Activated CD8-positive, alpha-beta T cell treated with anti-CD3 and anti-CD28 coated beads, Interleukin-2, amount 10 ng/mL, durations not matched to agents 7 days and 5 days (primary cell): ENCODE measurements at regions of chr9 and their contacts with region 1.

Region 1: DNA sequence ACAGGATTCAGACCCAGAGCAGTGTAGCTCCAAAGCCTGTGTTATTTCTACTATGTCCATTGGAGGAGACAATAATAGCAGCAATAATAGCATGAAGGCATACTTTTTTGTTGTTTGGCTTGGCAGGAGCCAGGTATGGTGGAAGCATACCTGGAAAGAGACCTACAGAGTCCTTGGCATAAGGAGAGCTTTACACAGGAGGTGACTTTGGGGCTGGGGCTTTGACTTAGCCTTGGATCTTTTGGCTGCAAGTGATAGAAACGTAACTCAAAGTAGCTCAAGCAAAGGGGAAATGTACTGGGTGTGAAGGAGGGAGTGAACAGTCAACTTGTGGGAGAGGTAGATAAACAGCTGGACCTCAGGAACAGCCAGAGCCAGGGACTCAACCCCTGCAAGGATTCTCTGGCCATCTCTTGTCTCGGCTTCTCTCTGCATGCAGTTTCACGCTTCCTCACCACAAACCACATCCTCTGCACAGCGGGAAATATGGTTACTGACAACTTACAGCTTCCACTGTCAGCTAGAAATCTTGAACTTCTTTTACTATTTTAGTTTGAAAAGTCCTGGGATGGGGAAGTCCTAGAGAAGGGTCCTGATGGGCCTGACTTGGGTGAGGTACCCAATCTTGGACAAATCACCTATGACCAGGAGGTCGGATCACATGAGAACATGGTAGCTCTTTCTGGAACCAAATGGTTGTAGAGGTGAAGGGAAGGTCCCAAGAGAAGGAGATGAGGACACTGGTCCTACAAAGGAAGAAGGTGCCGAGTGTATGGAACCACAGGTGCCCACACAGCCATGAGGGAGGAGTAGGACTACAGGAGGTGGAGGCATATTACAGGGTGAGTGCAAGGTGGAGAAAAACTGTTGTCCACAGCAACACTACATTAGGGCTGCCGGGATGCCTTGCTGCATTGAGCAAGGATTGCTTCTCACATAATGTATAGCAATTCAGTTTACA is 47.0 kb upstream of the TGFBR1 start:
- DNase-seq: peak; percentile 94
- ATAC-seq: peak; percentile 82
- H3K4me3 Mint-ChIP-seq: peak overlapping the region; percentile 78
- H3K27ac Mint-ChIP-seq: peak overlapping the region; percentile 98
- H3K4me1 Mint-ChIP-seq: peaks cover 82% of the 10 kb centered on the region
- H3K27me3 Mint-ChIP-seq: no peaks in the 10 kb centered on the region

Region 2: DNA sequence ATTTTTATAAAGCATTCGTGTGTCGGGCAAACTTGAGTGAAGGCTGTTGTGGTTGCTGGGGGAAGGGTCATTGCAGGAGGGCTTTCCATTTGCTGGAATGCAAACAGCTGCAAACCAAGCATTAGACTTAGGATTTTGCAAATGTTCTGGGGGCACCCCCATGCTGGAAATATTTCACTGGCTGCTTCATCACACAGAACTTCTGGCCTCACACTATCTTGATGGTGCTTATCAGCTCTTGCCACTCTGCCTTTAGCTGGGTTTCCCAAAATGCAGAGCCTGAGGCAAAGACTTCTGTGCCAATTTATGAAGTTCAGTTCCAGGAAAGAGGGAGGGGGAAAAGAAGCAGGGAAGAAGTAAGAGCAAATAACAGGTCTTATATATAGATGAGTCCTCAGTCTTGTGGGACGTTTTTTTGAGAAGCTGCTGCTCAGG is 122.9 kb before region 1 on chr9:
- CTCF ChIA-PET with region 1: no interaction called
- POLR2A ChIA-PET with region 1: no interaction called
- DNase-seq: no peak
- ATAC-seq: no peak
- H3K4me3 Mint-ChIP-seq: no peak overlapping the region
- H3K27ac Mint-ChIP-seq: no peak overlapping the region
- H3K4me1 Mint-ChIP-seq: no peaks in the 10 kb centered on the region
- H3K27me3 Mint-ChIP-seq: peaks cover 36% of the 10 kb centered on the region

Region 3: DNA sequence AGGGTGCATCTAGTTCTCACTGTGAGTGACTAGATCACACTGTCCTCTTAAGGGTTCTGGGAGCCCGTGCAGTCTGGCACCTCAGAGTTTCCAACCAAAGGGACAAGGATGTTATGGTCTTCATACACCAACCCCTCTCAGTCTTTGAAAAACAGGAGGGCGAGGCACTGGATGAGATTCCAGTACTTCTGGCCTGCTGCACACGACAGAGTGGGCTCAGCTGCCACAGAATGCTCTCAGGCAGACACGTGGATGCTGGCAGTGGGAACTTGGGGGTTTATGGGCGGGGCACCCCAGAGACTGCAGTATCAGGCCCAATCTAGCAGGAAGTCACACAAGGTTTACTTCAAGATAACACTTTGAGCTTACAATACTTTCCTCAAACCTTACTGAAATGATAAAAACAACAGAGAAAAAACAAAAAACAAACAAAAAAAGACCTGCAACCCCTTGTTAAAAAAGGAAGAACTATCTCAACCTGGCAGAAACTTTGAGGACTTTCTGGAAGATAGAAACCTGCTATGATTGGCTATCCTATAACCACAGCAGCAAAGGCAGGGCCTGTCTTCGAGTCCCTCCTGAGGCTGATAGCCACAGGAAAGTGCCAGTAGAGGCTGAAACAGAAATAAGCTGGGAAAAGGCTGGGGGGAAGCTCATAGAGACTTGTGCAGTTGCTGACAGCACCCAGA is 18.7 kb after region 1 on chr9:
- CTCF ChIA-PET with region 1: interaction called, 12 read pairs
- POLR2A ChIA-PET with region 1: interaction called, 4 read pairs
- DNase-seq: peak; percentile 78
- ATAC-seq: peak; percentile 94
- H3K4me3 Mint-ChIP-seq: peak overlapping the region; percentile 34
- H3K27ac Mint-ChIP-seq: peak overlapping the region; percentile 93
- H3K4me1 Mint-ChIP-seq: peaks cover 48% of the 10 kb centered on the region
- H3K27me3 Mint-ChIP-seq: no peaks in the 10 kb centered on the region

Region 4: DNA sequence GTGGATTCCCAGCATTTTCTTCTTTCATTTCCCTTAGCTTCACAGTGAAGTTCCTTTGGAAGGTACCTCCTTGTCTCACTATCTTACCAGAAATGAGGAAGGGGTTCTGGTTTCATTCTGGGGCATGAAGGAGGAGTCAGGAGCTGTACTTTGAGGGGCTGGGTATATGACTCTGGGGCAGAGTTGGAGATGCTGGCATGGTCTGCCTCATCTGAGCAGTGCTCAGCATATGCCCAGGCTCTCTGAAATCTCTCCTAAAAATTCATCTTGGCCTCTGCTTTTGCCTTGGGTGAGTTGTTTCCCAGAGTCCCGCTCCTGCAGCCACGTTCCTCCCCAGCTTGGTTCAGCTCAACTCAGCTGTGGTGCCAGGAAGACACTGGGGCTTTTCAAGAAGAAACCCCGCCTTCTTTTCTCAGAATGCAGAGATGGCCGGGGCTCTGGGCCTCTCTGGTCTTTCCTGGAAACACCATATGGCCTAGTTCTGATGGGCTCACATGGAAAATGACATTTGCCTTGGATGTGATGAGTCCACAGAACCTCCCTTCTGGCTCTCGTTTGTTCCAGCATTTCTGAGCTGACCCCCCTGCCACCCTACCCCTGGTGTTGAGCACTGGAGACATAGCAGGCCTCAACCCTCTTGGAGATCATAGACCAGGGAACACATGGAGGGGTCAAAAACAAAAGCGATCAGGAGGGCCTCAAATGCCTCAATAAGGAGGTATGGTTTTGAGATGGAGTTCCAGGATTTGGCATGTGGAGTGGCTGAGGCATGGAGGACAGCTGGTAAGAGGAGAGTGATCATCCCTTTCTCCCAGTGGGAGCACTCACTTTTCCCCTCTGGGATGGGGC is 34.9 kb after region 1 on chr9:
- CTCF ChIA-PET with region 1: interaction called, 18 read pairs
- POLR2A ChIA-PET with region 1: interaction called, 37 read pairs
- DNase-seq: peak; percentile 86
- ATAC-seq: peak; percentile 88
- H3K4me3 Mint-ChIP-seq: peak overlapping the region; percentile 66
- H3K27ac Mint-ChIP-seq: peak overlapping the region; percentile 98
- H3K4me1 Mint-ChIP-seq: peaks cover 81% of the 10 kb centered on the region
- H3K27me3 Mint-ChIP-seq: no peaks in the 10 kb centered on the region

Region 5: GRCh38 chr9:99104459-99105151 is 46.7 kb after region 1 on chr9 and contains the start of gene TGFBR1:
- CTCF ChIA-PET with region 1: interaction called, 43 read pairs
- POLR2A ChIA-PET with region 1: interaction called, 24 read pairs
- DNase-seq: peak; percentile 94
- ATAC-seq: peak; percentile 90
- H3K4me3 Mint-ChIP-seq: peak within 1 kb of the TSS; percentile 89
- H3K27ac Mint-ChIP-seq: peak within 1 kb of the TSS; percentile 92
- H3K4me1 Mint-ChIP-seq: peaks cover 76% of the 10 kb centered on the region
- H3K27me3 Mint-ChIP-seq: no peaks in the 10 kb centered on the region
- total RNA-seq, gene TGFBR1: 90.1 to 90.9 TPM

Region 6: GRCh38 chr9:99112750-99113413 is 54.9 kb after region 1 on chr9:
- CTCF ChIA-PET with region 1: interaction called, 5 read pairs
- POLR2A ChIA-PET with region 1: interaction called, 13 read pairs
- DNase-seq: peak; percentile 78
- ATAC-seq: peak; percentile 98
- H3K4me3 Mint-ChIP-seq: peak overlapping the region; percentile 61
- H3K27ac Mint-ChIP-seq: peak overlapping the region; percentile 86
- H3K4me1 Mint-ChIP-seq: peaks cover 91% of the 10 kb centered on the region
- H3K27me3 Mint-ChIP-seq: no peaks in the 10 kb centered on the region